Naive thymus-derived CD4-positive, alpha-beta T cell (primary cell): ENCODE measurements at regions of chr16 and their contacts with region 1.

Region 1: GRCh38 chr16:27318392-27319226 is 4.8 kb downstream of the IL4R start:
- DNase-seq: peak; percentile 22 to 77 (median 52)
- ATAC-seq: peak; percentile 61
- H3K4me3 ChIP-seq: peak overlapping the region; percentile 63
- H3K4me3 Mint-ChIP-seq: peak overlapping the region; percentile 85 to 99 (median 97)
- H3K27ac ChIP-seq: peak overlapping the region; percentile 99
- H3K27ac Mint-ChIP-seq: peak overlapping the region; percentile 92 to 99 (median 95)
- H3K4me1 ChIP-seq: peaks cover 37 to 43% of the 10 kb centered on the region in 2 donors
- H3K4me1 Mint-ChIP-seq: peaks cover 67 to 85% (median 75%) of the 10 kb centered on the region in 7 donors
- H3K27me3 ChIP-seq: no peaks in the 10 kb centered on the region
- H3K27me3 Mint-ChIP-seq: no peaks in the 10 kb centered on the region

Region 2: GRCh38 chr16:27242868-27243590 is 75.6 kb before region 1 on chr16:
- CTCF ChIA-PET with region 1: interaction called, 107 read pairs
- POLR2A ChIA-PET with region 1: interaction called, 139 read pairs
- intact Hi-C with region 1: no loop called
- DNase-seq: peak in 7 of 9 donors; percentile 21 to 52 (median 39)
- ATAC-seq: peak; percentile 68
- H3K4me3 ChIP-seq: peak overlapping the region; percentile 38
- H3K4me3 Mint-ChIP-seq: peak overlapping the region in 9 of 10 donors; percentile 46 to 76 (median 66)
- H3K27ac ChIP-seq: no peak overlapping the region
- H3K27ac Mint-ChIP-seq: peak overlapping the region; percentile 56 to 95 (median 85)
- H3K4me1 ChIP-seq: peaks cover 6 to 25% of the 10 kb centered on the region in 2 donors
- H3K4me1 Mint-ChIP-seq: peaks cover 53 to 90% (median 82%) of the 10 kb centered on the region in 7 donors
- H3K27me3 ChIP-seq: no peaks in the 10 kb centered on the region
- H3K27me3 Mint-ChIP-seq: no peaks in the 10 kb centered on the region

Region 3: GRCh38 chr16:27268376-27269299 is 50.0 kb before region 1 on chr16 and contains the start of gene NSMCE1:
- CTCF ChIA-PET with region 1: interaction called, 7 read pairs
- POLR2A ChIA-PET with region 1: interaction called, 4 read pairs
- intact Hi-C with region 1: loop called in 1 of 2 experiments (anchors 1 kb)
- DNase-seq: peak; percentile 83 to 93 (median 92)
- ATAC-seq: peak; percentile 99
- H3K4me3 ChIP-seq: peak within 1 kb of the TSS; percentile 92
- H3K4me3 Mint-ChIP-seq: peak within 1 kb of the TSS; percentile 92 to 99 (median 96)
- H3K27ac ChIP-seq: peak within 1 kb of the TSS; percentile 87
- H3K27ac Mint-ChIP-seq: peak within 1 kb of the TSS; percentile 94 to 99 (median 99)
- H3K4me1 ChIP-seq: peaks cover 15 to 36% of the 10 kb centered on the region in 2 donors
- H3K4me1 Mint-ChIP-seq: peaks cover 41 to 95% (median 74%) of the 10 kb centered on the region in 7 donors
- H3K27me3 ChIP-seq: no peaks in the 10 kb centered on the region
- H3K27me3 Mint-ChIP-seq: no peaks in the 10 kb centered on the region
- total RNA-seq, gene NSMCE1: 45.5 to 106 (median 70.2) TPM

Region 4: DNA sequence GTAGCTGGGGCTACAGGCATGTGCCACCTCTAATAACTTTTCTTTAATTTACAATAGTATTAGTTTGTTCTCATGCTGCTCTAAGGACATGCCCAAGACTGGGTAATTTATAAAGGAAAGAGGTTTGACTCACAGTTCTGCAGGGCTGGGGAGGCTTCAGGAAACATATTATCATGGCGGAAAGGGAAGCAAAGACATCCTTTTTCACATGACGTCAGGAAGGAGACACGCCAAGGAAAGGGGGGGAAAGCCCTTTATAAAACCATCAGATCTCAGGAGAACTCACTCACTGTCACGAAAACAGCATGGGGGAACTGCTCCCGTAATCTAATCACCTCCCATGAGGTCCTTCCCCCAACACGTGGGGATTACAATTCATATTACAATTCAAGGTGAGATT is 13.5 kb after region 1 on chr16:
- CTCF ChIA-PET with region 1: interaction called, 3 read pairs
- POLR2A ChIA-PET with region 1: interaction called, 4 read pairs
- intact Hi-C with region 1: loop called (anchors 1 kb)
- DNase-seq: no peak
- ATAC-seq: peak; percentile 49
- H3K4me3 ChIP-seq: no peak overlapping the region
- H3K4me3 Mint-ChIP-seq: peak overlapping the region in 4 of 10 donors; percentile 12 to 35 (median 30)
- H3K27ac ChIP-seq: no peak overlapping the region
- H3K27ac Mint-ChIP-seq: peak overlapping the region in 8 of 9 donors; percentile 25 to 82 (median 77)
- H3K4me1 ChIP-seq: peaks cover 4 to 34% of the 10 kb centered on the region in 2 donors
- H3K4me1 Mint-ChIP-seq: peaks cover 40 to 94% (median 80%) of the 10 kb centered on the region in 7 donors
- H3K27me3 ChIP-seq: no peaks in the 10 kb centered on the region
- H3K27me3 Mint-ChIP-seq: no peaks in the 10 kb centered on the region

Region 5: GRCh38 chr16:27455700-27456099 is 137.1 kb after region 1 on chr16:
- CTCF ChIA-PET with region 1: no interaction called
- POLR2A ChIA-PET with region 1: no interaction called
- intact Hi-C with region 1: loop called (anchors 2 kb)
- DNase-seq: peak in 6 of 9 donors; percentile 22 to 47 (median 32)
- ATAC-seq: peak; percentile 18
- H3K4me3 ChIP-seq: no peak overlapping the region
- H3K4me3 Mint-ChIP-seq: peak overlapping the region in 9 of 10 donors; percentile 3 to 75 (median 23)
- H3K27ac ChIP-seq: no peak overlapping the region
- H3K27ac Mint-ChIP-seq: peak overlapping the region; percentile 54 to 87 (median 79)
- H3K4me1 ChIP-seq: peaks cover 24 to 46% of the 10 kb centered on the region in 2 donors
- H3K4me1 Mint-ChIP-seq: peaks cover 30 to 75% (median 51%) of the 10 kb centered on the region in 7 donors
- H3K27me3 ChIP-seq: no peaks in the 10 kb centered on the region
- H3K27me3 Mint-ChIP-seq: no peaks in the 10 kb centered on the region

Region 6: GRCh38 chr16:27625050-27625697 is 306.6 kb after region 1 on chr16:
- CTCF ChIA-PET with region 1: no interaction called
- POLR2A ChIA-PET with region 1: no interaction called
- intact Hi-C with region 1: no loop called
- DNase-seq: no peak
- ATAC-seq: no peak
- H3K4me3 ChIP-seq: no peak overlapping the region
- H3K4me3 Mint-ChIP-seq: no peak overlapping the region
- H3K27ac ChIP-seq: no peak overlapping the region
- H3K27ac Mint-ChIP-seq: no peak overlapping the region
- H3K4me1 ChIP-seq: no peaks in the 10 kb centered on the region
- H3K4me1 Mint-ChIP-seq: peaks cover 0 to 6% (median 2%) of the 10 kb centered on the region in 7 donors
- H3K27me3 ChIP-seq: no peaks in the 10 kb centered on the region
- H3K27me3 Mint-ChIP-seq: no peaks in the 10 kb centered on the region